CD8-positive, alpha-beta T cell (primary cell): ENCODE measurements at regions of chr6 and their contacts with region 1.

Region 1: GRCh38 chr6:136751522-136751956 is 40.7 kb downstream of the MAP3K5 start:
- DNase-seq: peak in 4 of 9 experiments; percentile 16 to 71 (median 39)
- ATAC-seq: peak; percentile 39
- H3K4me3 ChIP-seq: peak overlapping the region; percentile 11 to 31
- H3K4me3 Mint-ChIP-seq: peak overlapping the region; percentile 54
- H3K27ac ChIP-seq: peak overlapping the region; percentile 19 to 55
- H3K27ac Mint-ChIP-seq: peak overlapping the region; percentile 86
- H3K4me1 ChIP-seq: peaks cover 46% of the 10 kb centered on the region
- H3K4me1 Mint-ChIP-seq: peaks cover 77% of the 10 kb centered on the region
- H3K27me3 ChIP-seq: no peaks in the 10 kb centered on the region
- H3K27me3 Mint-ChIP-seq: no peaks in the 10 kb centered on the region
- CTCF ChIP-seq: no peak

Region 2: GRCh38 chr6:136732889-136733288 is 18.6 kb before region 1 on chr6:
- CTCF ChIA-PET with region 1: no interaction called
- POLR2A ChIA-PET with region 1: no interaction called
- intact Hi-C with region 1: loop called in 1 of 2 experiments (anchors 2 kb)
- DNase-seq: no peak
- ATAC-seq: no peak
- H3K4me3 ChIP-seq: no peak overlapping the region
- H3K4me3 Mint-ChIP-seq: no peak overlapping the region
- H3K27ac ChIP-seq: no peak overlapping the region
- H3K27ac Mint-ChIP-seq: no peak overlapping the region
- H3K4me1 ChIP-seq: no peaks in the 10 kb centered on the region
- H3K4me1 Mint-ChIP-seq: peaks cover 33% of the 10 kb centered on the region
- H3K27me3 ChIP-seq: no peaks in the 10 kb centered on the region
- H3K27me3 Mint-ChIP-seq: no peaks in the 10 kb centered on the region
- CTCF ChIP-seq: no peak

Region 3: GRCh38 chr6:136772685-136773472 is 21.3 kb after region 1 on chr6:
- CTCF ChIA-PET with region 1: interaction called, 4 read pairs
- POLR2A ChIA-PET with region 1: no interaction called
- intact Hi-C with region 1: loop called in 1 of 2 experiments (anchors 2 kb)
- DNase-seq: no peak
- ATAC-seq: no peak
- H3K4me3 ChIP-seq: no peak overlapping the region
- H3K4me3 Mint-ChIP-seq: no peak overlapping the region
- H3K27ac ChIP-seq: no peak overlapping the region
- H3K27ac Mint-ChIP-seq: peak overlapping the region; percentile 75
- H3K4me1 ChIP-seq: peaks cover 2% of the 10 kb centered on the region
- H3K4me1 Mint-ChIP-seq: peaks cover 60% of the 10 kb centered on the region
- H3K27me3 ChIP-seq: no peaks in the 10 kb centered on the region
- H3K27me3 Mint-ChIP-seq: no peaks in the 10 kb centered on the region
- CTCF ChIP-seq: no peak